PC-9 (cell line): ENCODE measurements at regions of chr3 and their contacts with region 1.

Region 1: DNA sequence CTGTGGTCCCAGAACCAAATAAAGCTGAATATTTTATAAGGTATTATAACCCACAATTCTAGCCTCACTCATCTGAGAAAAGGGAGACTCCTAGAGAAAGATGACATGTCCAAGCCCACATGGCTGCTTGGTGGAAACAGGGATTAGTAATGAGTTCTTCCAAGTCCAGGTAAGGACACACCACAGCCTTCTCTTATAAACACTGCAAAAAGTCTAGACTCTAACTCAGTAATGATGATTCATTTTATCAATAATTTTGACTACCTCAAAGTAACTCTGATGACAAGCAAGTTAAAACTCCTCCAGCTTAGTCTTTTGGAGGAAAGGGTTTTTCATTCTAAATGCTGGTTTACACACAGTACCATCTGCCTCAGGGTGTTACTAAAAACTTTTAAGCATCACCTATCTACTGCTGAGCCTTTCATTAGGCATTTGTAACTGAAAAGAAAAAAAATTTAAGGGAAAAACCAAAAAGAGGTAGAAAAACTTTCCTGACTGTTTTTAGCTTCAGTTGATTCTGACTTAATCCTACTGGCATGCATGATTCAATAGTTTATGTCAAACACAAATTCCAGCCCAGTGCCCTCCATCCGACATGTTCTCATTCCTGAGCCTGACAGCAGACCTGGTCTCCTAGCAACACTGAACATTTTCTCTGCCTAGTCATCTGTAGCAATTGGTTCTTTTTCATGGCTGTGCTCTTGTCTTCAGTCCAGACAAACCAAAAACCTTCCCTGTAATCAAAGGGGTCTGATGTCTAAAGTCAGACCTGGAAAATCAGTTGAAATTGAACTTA is 43.9 kb downstream of the P3H2 start:
- DNase-seq: peak; percentile 80 to 94
- H3K4me3 ChIP-seq: no peak overlapping the region
- H3K27ac ChIP-seq: peak overlapping the region; percentile 64
- H3K4me1 ChIP-seq: peaks cover 27% of the 10 kb centered on the region
- H3K27me3 ChIP-seq: no peaks in the 10 kb centered on the region
- CTCF ChIP-seq: no peak

Region 2: DNA sequence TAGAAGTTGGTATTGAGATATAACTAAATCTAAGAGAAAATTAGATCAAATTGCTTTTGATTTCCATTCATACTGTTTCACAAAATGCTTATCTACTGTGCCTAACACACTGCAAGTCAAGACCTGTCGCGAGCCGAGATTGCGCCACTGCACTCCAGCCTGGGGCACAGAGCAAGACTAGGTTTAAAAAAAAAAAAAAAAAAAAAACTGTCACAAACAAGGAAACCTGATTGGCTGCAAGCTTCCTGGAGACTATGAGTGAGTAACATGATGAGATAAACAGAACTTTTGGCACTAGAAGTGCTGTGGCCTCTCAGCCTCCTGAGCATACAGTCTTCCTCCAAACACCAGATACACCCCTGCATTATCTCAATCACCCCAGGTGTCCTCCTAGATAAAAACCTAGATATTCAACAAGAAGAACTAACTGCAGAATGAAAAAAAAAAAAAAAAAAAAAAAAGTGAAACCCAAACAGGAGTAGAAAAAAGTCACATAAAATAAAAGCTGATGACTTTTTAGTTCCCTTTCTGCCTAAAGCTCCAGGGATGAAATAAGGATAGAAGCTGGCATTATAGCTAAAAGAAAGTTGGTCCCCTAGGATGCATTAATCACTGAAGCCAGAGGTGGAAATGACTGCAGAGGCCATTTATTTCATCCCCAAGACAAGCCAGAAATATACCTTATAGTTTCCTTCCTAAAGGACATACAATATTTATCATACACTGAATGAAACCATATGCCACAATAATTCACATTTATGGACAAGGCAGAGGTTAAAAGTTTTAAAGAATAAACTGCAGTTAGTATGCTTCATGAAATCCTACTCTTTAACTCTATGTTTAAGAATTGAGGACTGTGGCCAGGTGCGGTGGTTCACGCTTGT is 38.5 kb before region 1 on chr3:
- CTCF ChIA-PET with region 1: no interaction called
- POLR2A ChIA-PET with region 1: no interaction called
- intact Hi-C with region 1: loop called (anchors 5 kb)
- DNase-seq: peak in 1 of 2 experiments; percentile 82
- H3K4me3 ChIP-seq: no peak overlapping the region
- H3K27ac ChIP-seq: no peak overlapping the region
- H3K4me1 ChIP-seq: no peaks in the 10 kb centered on the region
- H3K27me3 ChIP-seq: no peaks in the 10 kb centered on the region
- CTCF ChIP-seq: no peak

Region 3: GRCh38 chr3:190053919-190054672 is 22.7 kb before region 1 on chr3:
- CTCF ChIA-PET with region 1: no interaction called
- POLR2A ChIA-PET with region 1: no interaction called
- intact Hi-C with region 1: loop called (anchors 2 kb)
- DNase-seq: peak; percentile 44 to 78
- H3K4me3 ChIP-seq: no peak overlapping the region
- H3K27ac ChIP-seq: no peak overlapping the region
- H3K4me1 ChIP-seq: peaks cover 8% of the 10 kb centered on the region; the same call in 1 of the 2 replicates
- H3K27me3 ChIP-seq: no peaks in the 10 kb centered on the region
- CTCF ChIP-seq: peak; percentile 51

Region 4: GRCh38 chr3:190092250-190092649 is 15.5 kb after region 1 on chr3:
- CTCF ChIA-PET with region 1: interaction called, 10 read pairs
- POLR2A ChIA-PET with region 1: no interaction called
- intact Hi-C with region 1: no loop called
- DNase-seq: no peak
- H3K4me3 ChIP-seq: no peak overlapping the region
- H3K27ac ChIP-seq: no peak overlapping the region
- H3K4me1 ChIP-seq: peaks cover 7% of the 10 kb centered on the region; the same call in 1 of the 2 replicates
- H3K27me3 ChIP-seq: no peaks in the 10 kb centered on the region
- CTCF ChIP-seq: no peak

Region 5: GRCh38 chr3:190120269-190121060 is 43.7 kb after region 1 on chr3 and contains the start of gene P3H2:
- CTCF ChIA-PET with region 1: no interaction called
- POLR2A ChIA-PET with region 1: interaction called, 5 read pairs
- intact Hi-C with region 1: loop called (anchors 2 kb)
- DNase-seq: peak; percentile 84 to 91
- H3K4me3 ChIP-seq: peak within 1 kb of the TSS; percentile 90
- H3K27ac ChIP-seq: no peak within 1 kb of the TSS
- H3K4me1 ChIP-seq: peaks cover 42% of the 10 kb centered on the region
- H3K27me3 ChIP-seq: no peaks in the 10 kb centered on the region
- CTCF ChIP-seq: peak; percentile 55; the same call in 1 of the 2 replicates
- total RNA-seq, gene P3H2: 20.9 and 26.2 TPM in 2 replicates